Pancreas (tissue), 10 donors: ENCODE measurements at regions of chr6 and their contacts with region 1.

Region 1: DNA sequence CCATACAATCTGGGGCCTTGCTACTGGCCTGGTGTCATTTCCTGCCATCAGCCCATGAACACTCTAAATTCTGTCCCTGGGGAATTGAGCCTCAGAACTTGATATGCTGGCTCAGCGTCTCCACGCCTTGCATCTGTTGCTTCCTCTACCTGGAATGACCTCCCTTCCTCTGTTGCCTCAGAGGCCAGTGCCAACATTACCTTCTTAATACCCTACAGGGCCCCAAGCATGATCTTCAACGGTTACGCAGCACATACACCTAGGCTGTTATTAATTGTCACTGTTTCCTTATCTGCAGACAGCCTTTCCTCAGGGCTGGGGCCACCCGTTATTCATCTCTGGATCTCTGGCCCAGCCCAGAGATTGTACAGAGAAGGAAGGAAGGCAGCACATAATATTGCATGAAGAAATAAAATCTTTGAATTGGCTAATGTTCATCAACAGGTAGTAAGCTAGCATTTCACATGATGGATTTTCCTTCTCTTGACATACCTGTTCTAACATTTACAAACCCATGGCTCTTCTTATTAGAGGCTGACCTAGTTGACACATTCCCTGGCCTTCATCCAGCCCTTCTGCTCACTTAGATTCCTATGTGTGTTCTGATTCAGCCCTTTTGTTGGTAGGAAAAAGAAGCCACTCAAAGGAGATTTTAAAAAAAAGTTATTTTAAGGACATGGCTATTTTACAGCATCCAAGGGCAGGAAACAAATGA is 8.4 kb upstream of the RNF182 start:
- DNase-seq: no peak
- ATAC-seq: peak in 2 of 4 donors; percentile 29 to 55
- H3K4me3 ChIP-seq: no peak overlapping the region
- H3K27ac ChIP-seq: no peak overlapping the region
- H3K4me1 ChIP-seq: no peaks in the 10 kb centered on the region
- H3K27me3 ChIP-seq: peaks cover 0 to 5% (median 0%) of the 10 kb centered on the region in 4 donors
- CTCF ChIP-seq: no peak

Region 2: DNA sequence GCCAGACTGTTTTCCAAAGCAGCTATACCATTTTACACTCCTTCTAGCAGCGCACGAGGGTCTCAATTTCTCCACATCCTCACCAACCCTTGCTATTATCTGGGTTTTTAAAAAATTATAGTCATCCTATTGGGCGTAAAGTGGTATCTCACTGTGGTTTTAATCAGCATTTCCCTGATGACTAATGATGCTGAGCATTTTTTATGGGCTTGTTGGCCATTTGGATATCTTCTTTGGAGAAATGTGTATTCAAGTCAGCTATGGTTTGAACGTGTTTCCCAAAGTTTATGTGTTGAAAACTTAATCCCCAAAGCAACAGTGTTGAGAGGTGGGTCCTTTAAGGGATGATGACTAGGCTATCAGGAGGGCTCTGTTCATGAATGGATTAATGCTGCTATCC is 108.7 kb before region 1 on chr6:
- intact Hi-C with region 1: no loop called
- DNase-seq: no peak
- ATAC-seq: no peak
- H3K4me3 ChIP-seq: no peak overlapping the region
- H3K27ac ChIP-seq: no peak overlapping the region
- H3K4me1 ChIP-seq: peaks cover 0 to 20% (median 10%) of the 10 kb centered on the region in 3 donors
- H3K27me3 ChIP-seq: no peaks in the 10 kb centered on the region
- CTCF ChIP-seq: no peak

Region 3: GRCh38 chr6:13953061-13953705 is 36.8 kb after region 1 on chr6:
- intact Hi-C with region 1: no loop called
- DNase-seq: no peak
- ATAC-seq: no peak
- H3K4me3 ChIP-seq: no peak overlapping the region
- H3K27ac ChIP-seq: no peak overlapping the region
- H3K4me1 ChIP-seq: no peaks in the 10 kb centered on the region
- H3K27me3 ChIP-seq: no peaks in the 10 kb centered on the region
- CTCF ChIP-seq: no peak

Region 4: DNA sequence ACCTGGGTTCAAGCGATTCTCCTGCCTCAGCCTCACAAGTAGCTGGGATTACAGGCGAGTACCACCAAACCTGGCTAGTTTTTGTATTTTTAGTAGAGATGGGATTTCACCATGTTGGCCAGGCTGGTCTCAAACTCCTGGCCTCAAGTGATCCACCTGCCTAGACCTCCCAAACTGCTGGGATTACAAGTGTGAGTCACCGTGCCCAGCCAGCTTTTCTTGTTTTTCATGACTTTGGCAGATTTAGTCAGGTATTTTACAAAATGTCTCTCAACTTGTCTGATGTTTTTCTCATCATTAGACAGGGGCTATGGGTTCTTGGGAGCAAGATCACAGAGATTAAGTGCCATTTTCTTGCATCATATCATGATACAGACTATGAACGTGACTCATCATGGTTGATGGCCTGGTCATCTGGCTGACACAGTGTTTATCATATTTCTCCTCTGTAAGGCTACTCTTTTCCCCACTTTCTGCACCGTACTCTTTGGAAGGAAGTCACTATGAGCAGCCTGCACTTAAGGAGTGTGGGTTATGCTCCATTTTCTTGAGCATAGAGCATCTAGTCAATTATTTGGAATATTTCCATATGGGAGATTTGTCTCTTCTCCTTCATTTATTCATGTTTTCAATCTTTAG is 76.1 kb after region 1 on chr6:
- intact Hi-C with region 1: no loop called
- DNase-seq: no peak
- ATAC-seq: no peak
- H3K4me3 ChIP-seq: no peak overlapping the region
- H3K27ac ChIP-seq: no peak overlapping the region
- H3K4me1 ChIP-seq: no peaks in the 10 kb centered on the region
- H3K27me3 ChIP-seq: no peaks in the 10 kb centered on the region
- CTCF ChIP-seq: no peak

Region 5: GRCh38 chr6:14026831-14027539 is 110.6 kb after region 1 on chr6:
- intact Hi-C with region 1: no loop called
- DNase-seq: no peak
- ATAC-seq: no peak
- H3K4me3 ChIP-seq: no peak overlapping the region
- H3K27ac ChIP-seq: no peak overlapping the region
- H3K4me1 ChIP-seq: no peaks in the 10 kb centered on the region
- H3K27me3 ChIP-seq: no peaks in the 10 kb centered on the region
- CTCF ChIP-seq: no peak

Region 6: GRCh38 chr6:14046476-14047068 is 130.2 kb after region 1 on chr6:
- intact Hi-C with region 1: loop called in 1 of 3 experiments (anchors 5 kb)
- DNase-seq: peak in 3 of 6 donors; percentile 32 to 56 (median 47)
- ATAC-seq: peak; percentile 83 to 96 (median 90)
- H3K4me3 ChIP-seq: no peak overlapping the region
- H3K27ac ChIP-seq: no peak overlapping the region
- H3K4me1 ChIP-seq: no peaks in the 10 kb centered on the region
- H3K27me3 ChIP-seq: no peaks in the 10 kb centered on the region
- CTCF ChIP-seq: peak in 3 of 4 donors; percentile 36 to 58 (median 49)